Panc1 (cell line): ENCODE measurements at regions of chr20 and their contacts with region 1.

Region 1: DNA sequence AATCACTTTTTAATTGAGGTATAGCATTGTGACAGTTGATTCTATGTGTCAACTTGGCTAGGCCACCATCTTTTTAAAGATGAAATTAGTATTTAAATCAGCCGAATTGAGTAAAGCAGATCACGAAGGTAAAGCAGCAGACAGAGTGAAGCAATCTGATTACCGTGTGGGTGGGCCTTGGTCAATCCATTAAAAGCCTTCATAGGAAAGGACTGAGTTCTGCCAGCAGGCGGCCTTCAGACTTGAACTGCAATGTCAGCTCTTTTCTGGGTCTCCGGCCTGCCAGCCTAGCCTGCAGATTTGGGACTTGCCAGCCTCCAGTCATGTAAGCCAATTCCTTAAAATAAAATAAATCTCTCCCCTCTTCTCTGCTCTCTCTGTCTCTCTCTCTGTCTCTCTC is 22.4 kb upstream of the TGM2 start:
- DNase-seq: no peak
- ATAC-seq: no peak
- H3K4me3 ChIP-seq: no peak overlapping the region
- H3K27ac ChIP-seq: no peak overlapping the region
- H3K4me1 ChIP-seq: no peaks in the 10 kb centered on the region
- H3K27me3 ChIP-seq: no peaks in the 10 kb centered on the region
- CTCF ChIP-seq: no peak

Region 2: DNA sequence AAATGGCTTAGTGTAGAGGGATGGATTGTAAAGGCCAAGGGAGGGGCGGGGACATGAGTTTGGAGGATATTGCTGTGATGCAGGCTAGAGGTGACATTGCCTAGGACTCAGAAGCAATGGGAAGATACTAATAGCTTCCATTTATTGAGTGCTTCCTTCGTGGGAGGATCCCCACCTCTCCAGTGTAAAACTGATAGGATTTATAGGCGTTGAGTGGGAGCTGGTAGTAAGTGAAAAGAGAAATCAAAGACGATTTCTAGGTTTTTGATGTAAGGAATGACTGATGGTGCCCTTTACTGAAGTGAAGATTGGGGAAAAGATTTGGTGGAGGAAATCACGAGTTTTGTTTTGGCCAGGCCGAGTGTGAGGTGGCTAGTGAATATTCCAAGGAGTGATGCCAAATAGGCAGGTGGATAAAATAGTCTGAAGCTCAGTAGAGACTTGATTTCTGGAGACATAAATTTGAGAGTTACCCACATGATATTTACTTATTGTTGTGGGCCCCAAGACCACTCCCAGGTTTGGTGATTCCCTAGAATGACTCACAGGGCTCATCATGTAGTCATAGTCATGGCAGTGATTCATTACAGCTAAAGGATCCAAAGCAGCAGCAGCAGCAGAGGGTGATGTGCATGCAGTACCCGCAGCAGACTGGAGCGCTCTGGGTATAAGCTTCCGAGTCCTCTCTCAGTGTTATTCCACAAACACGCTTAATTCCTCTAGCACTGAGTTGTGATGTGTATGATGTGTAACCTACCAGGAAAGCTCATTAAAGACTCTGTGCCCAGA is 143.8 kb before region 1 on chr20:
- CTCF ChIA-PET with region 1: no interaction called
- POLR2A ChIA-PET with region 1: interaction called, 11 read pairs
- in situ Hi-C with region 1: no loop called
- intact Hi-C with region 1: no loop called
- DNase-seq: peak; percentile 80
- ATAC-seq: peak; percentile 73; the same call in 1 of the 2 replicates
- H3K4me3 ChIP-seq: no peak overlapping the region
- H3K27ac ChIP-seq: no peak overlapping the region
- H3K4me1 ChIP-seq: no peaks in the 10 kb centered on the region
- H3K27me3 ChIP-seq: no peaks in the 10 kb centered on the region
- CTCF ChIP-seq: no peak

Region 3: DNA sequence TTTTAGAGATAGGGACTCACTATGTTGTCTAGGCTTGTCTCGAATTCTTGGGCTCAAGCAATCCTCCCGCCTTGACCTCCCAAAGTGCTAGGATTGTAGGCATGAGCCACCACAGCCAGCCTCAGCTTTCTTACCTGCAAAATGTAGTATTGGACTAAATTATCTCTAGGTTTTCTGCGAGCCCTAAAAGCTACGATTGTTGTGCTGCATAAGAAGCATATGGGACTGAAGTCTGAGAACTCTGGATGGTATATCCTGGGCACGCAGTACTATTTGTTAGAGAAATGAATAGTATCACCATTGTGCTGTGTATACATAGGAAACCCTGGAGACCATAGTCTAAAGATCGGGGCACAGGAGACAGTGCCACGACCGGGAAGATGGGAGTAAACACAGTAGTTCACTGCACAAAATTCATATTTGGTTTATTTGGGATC is 93.9 kb before region 1 on chr20:
- CTCF ChIA-PET with region 1: no interaction called
- POLR2A ChIA-PET with region 1: interaction called, 13 read pairs
- in situ Hi-C with region 1: no loop called
- intact Hi-C with region 1: no loop called
- DNase-seq: no peak
- ATAC-seq: no peak
- H3K4me3 ChIP-seq: no peak overlapping the region
- H3K27ac ChIP-seq: no peak overlapping the region
- H3K4me1 ChIP-seq: peaks cover 13% of the 10 kb centered on the region
- H3K27me3 ChIP-seq: no peaks in the 10 kb centered on the region
- CTCF ChIP-seq: no peak

Region 4: DNA sequence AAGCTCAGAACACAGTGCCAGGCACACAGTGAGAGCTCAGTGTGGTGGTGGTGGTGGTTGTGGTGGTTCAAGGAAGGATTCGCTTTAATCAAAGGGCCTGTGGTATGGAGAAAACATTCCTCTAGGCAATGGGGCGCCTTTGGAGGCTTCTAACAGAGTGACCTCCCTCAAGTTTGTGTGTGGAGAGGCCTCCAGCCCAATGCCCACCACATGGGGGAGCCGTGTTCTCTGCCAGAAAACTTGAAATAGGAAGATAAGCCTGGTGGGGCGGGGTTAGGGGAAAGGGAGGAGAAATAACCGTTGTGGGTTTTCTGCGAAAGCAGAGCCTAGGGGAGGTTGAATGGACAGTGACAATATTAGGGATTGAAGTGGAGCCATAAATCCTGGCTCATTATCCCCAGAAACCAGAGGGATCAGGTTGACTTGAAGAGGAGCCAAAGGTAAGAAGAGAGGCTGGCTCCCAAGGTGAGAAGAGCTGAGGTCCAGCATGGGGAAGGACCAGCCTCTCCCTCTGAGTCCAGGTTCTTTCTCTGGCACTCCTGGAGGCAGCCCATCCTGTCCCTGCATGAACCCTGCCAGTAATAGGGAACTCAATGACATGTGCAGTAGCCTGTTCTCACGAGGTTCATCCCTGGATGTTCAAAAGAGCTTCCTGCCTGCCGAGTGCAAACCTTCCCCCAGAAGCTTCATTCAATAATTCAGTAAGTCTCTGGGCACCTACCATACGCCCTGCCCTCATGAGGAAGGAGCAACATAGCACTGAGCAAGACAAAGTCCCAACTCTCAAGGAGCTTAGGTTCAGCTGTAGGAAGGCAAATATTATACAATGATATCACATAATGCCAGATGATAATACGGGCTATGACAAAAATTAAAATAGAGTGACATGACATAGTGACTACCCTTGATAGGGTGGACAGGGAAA is 73.8 kb before region 1 on chr20:
- CTCF ChIA-PET with region 1: no interaction called
- POLR2A ChIA-PET with region 1: no interaction called
- in situ Hi-C with region 1: no loop called
- intact Hi-C with region 1: no loop called
- DNase-seq: no peak
- ATAC-seq: no peak
- H3K4me3 ChIP-seq: no peak overlapping the region
- H3K27ac ChIP-seq: peak overlapping the region; percentile 40
- H3K4me1 ChIP-seq: peaks cover 34% of the 10 kb centered on the region
- H3K27me3 ChIP-seq: no peaks in the 10 kb centered on the region
- CTCF ChIP-seq: peak; percentile 62

Region 5: GRCh38 chr20:38221119-38221589 is 33.6 kb after region 1 on chr20:
- CTCF ChIA-PET with region 1: interaction called, 4 read pairs
- POLR2A ChIA-PET with region 1: interaction called, 13 read pairs
- in situ Hi-C with region 1: no loop called
- intact Hi-C with region 1: no loop called
- DNase-seq: no peak
- ATAC-seq: peak; percentile 79
- H3K4me3 ChIP-seq: peak overlapping the region in 1 of 2 experiments; percentile 23; a peak in 2 of 4 replicates
- H3K27ac ChIP-seq: no peak overlapping the region
- H3K4me1 ChIP-seq: peaks cover 12% of the 10 kb centered on the region
- H3K27me3 ChIP-seq: no peaks in the 10 kb centered on the region
- CTCF ChIP-seq: peak; percentile 96

Region 6: GRCh38 chr20:38304845-38305447 is 117.4 kb after region 1 on chr20:
- CTCF ChIA-PET with region 1: no interaction called
- POLR2A ChIA-PET with region 1: no interaction called
- in situ Hi-C with region 1: no loop called
- intact Hi-C with region 1: no loop called
- DNase-seq: peak; percentile 7
- ATAC-seq: peak; percentile 83
- H3K4me3 ChIP-seq: no peak overlapping the region
- H3K27ac ChIP-seq: no peak overlapping the region
- H3K4me1 ChIP-seq: no peaks in the 10 kb centered on the region
- H3K27me3 ChIP-seq: no peaks in the 10 kb centered on the region
- CTCF ChIP-seq: peak; percentile 79